Heart right ventricle (tissue), 16 donors: ENCODE measurements at regions of chr3 and their contacts with region 1.

Region 1: DNA sequence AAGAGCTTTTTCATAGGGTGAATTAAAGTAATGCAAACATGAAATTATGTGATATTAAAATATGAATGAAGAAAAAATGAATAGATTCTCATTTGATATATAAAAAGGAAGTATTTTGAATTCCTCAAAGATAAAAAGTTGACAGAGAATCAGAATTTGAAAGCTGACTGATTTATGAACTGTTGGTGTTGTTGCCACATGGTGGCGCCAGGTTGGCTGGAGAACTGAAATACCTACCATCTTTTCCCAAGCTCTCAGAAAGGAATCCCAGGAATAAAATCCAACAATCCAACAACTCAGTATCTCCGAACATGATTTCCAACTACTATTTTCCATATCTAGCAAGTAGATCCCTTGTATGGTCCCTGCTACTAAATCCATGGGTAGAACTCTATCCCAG is 3.1 kb downstream of the MYRIP start:
- DNase-seq: no peak
- ATAC-seq: no peak
- H3K4me3 ChIP-seq: no peak overlapping the region
- H3K27ac ChIP-seq: no peak overlapping the region
- H3K4me1 ChIP-seq: peaks cover 6 to 23% (median 15%) of the 10 kb centered on the region in 9 donors
- H3K27me3 ChIP-seq: peaks cover 0 to 61% (median 37%) of the 10 kb centered on the region in 7 donors
- CTCF ChIP-seq: peak in 7 of 9 donors; percentile 35 to 55 (median 40)

Region 2: DNA sequence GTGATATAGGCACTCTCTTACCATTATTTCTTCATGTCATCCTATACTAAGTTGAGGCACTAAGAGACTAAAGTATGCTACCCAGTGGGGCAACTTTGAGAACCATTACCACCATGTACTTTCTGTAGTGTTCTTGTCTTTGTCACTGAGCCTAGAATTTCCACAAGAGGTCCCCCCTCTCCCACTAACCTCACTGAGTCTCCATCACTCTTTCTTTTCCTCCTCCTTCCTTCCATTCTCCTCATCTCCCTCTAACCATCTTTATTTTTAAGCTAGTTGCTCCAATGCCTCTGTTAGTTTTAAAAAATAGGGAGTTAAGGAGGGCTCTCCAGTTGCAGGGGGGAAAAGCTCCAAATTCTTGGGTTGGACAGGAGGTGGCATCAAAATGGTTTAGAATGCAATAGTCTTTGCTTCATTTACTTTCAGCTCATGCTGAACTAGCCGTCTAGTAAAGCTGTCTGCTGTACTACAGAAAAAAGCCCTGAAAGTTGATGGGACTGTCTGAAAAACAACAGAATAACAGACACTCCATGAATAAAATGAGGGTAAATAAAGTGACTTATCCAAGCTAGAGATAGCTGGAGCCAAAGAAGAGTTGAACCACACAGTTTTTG is 88.2 kb before region 1 on chr3:
- intact Hi-C with region 1: loop called in 1 of 10 experiments (anchors 10 kb)
- DNase-seq: no peak
- ATAC-seq: peak in 1 of 8 donors; percentile 37
- H3K4me3 ChIP-seq: no peak overlapping the region
- H3K27ac ChIP-seq: no peak overlapping the region
- H3K4me1 ChIP-seq: no peaks in the 10 kb centered on the region
- H3K27me3 ChIP-seq: no peaks in the 10 kb centered on the region
- CTCF ChIP-seq: peak in 8 of 9 donors; percentile 15 to 55 (median 48)

Region 3: GRCh38 chr3:39762537-39763070 is 49.9 kb before region 1 on chr3:
- intact Hi-C with region 1: no loop called
- DNase-seq: no peak
- ATAC-seq: no peak
- H3K4me3 ChIP-seq: no peak overlapping the region
- H3K27ac ChIP-seq: no peak overlapping the region
- H3K4me1 ChIP-seq: peaks cover 0 to 3% (median 0%) of the 10 kb centered on the region in 9 donors
- H3K27me3 ChIP-seq: no peaks in the 10 kb centered on the region
- CTCF ChIP-seq: no peak

Region 4: GRCh38 chr3:39962581-39962980 is 150.0 kb after region 1 on chr3:
- intact Hi-C with region 1: loop called in 3 of 10 experiments (anchors 5 to 10 kb)
- DNase-seq: peak in 1 of 2 donors; percentile 18
- ATAC-seq: peak in 7 of 8 donors; percentile 28 to 67 (median 54)
- H3K4me3 ChIP-seq: no peak overlapping the region
- H3K27ac ChIP-seq: peak overlapping the region in 6 of 10 donors; percentile 4 to 70 (median 69)
- H3K4me1 ChIP-seq: peaks cover 6 to 55% (median 27%) of the 10 kb centered on the region in 9 donors
- H3K27me3 ChIP-seq: no peaks in the 10 kb centered on the region
- CTCF ChIP-seq: no peak